ENCODE measurements at regions of chr1 and their contacts with region 1.

Region 1: GRCh38 chr1:162772571-162773154 is 17.8 kb upstream of the HSD17B7 start:
- DNase-seq: no peak
- ATAC-seq: peak in 4 of 8 donors; percentile 44 to 82 (median 74)
- H3K4me3 ChIP-seq: no peak overlapping the region
- H3K27ac ChIP-seq: no peak overlapping the region
- H3K4me1 ChIP-seq: no peaks in the 10 kb centered on the region
- H3K27me3 ChIP-seq: no peaks in the 10 kb centered on the region
- CTCF ChIP-seq: no peak

Region 2: GRCh38 chr1:162612606-162613400 is 159.9 kb before region 1 on chr1:
- intact Hi-C with region 1: loop called in 2 of 10 experiments (anchors 10 kb)
- DNase-seq: peak in 1 of 2 donors; percentile 28
- ATAC-seq: peak in 7 of 8 donors; percentile 33 to 77 (median 41)
- H3K4me3 ChIP-seq: no peak overlapping the region
- H3K27ac ChIP-seq: peak overlapping the region in 5 of 10 donors; percentile 3 to 58 (median 44)
- H3K4me1 ChIP-seq: peaks cover 0 to 17% (median 10%) of the 10 kb centered on the region in 9 donors
- H3K27me3 ChIP-seq: no peaks in the 10 kb centered on the region
- CTCF ChIP-seq: no peak

Region 3: GRCh38 chr1:162627662-162628296 is 144.9 kb before region 1 on chr1:
- intact Hi-C with region 1: loop called in 1 of 10 experiments (anchors 10 kb)
- DNase-seq: no peak
- ATAC-seq: no peak
- H3K4me3 ChIP-seq: no peak overlapping the region
- H3K27ac ChIP-seq: peak overlapping the region in 1 of 10 donors; percentile 62
- H3K4me1 ChIP-seq: peaks cover 4 to 36% (median 19%) of the 10 kb centered on the region in 9 donors
- H3K27me3 ChIP-seq: no peaks in the 10 kb centered on the region
- CTCF ChIP-seq: peak in 7 of 9 donors; percentile 16 to 55 (median 39)

Region 4: DNA sequence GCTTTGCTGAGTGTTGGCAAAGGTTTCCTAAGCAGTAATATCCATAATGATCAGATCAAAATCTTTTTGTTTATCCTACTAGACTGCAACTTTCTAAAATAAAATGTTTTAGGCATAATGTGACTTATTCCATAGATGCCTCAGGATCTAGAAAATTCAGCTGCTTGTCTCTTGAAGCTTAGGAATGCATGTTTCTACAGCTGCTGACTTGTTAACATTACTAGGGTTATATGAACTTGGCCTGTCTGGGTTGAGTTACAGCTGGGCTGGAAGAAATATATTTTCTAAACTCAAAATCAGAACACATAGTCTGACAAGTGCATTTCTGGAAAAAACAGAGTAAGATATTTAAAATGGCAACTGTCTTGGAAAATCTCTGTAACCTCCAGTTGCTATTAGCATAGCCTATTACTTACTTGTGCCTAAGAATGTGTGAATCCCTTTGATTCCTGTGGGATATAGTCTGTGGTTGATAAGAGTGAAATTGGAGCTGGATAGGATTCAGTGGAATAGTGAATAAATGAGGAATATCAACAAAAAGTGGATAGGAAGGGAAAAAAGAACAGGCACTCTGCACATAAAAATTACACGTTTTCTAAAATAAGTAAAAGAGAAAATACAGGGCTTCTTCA is 357.7 kb after region 1 on chr1:
- intact Hi-C with region 1: no loop called
- DNase-seq: no peak
- ATAC-seq: peak in 6 of 8 donors; percentile 28 to 87 (median 69)
- H3K4me3 ChIP-seq: no peak overlapping the region
- H3K27ac ChIP-seq: peak overlapping the region in 4 of 10 donors; percentile 21 to 51 (median 38)
- H3K4me1 ChIP-seq: peaks cover 0 to 8% (median 0%) of the 10 kb centered on the region in 9 donors
- H3K27me3 ChIP-seq: no peaks in the 10 kb centered on the region
- CTCF ChIP-seq: no peak